Cardiac septum (tissue), 1 donor: ENCODE measurements at regions of chr1 and their contacts with region 1.

Region 1: DNA sequence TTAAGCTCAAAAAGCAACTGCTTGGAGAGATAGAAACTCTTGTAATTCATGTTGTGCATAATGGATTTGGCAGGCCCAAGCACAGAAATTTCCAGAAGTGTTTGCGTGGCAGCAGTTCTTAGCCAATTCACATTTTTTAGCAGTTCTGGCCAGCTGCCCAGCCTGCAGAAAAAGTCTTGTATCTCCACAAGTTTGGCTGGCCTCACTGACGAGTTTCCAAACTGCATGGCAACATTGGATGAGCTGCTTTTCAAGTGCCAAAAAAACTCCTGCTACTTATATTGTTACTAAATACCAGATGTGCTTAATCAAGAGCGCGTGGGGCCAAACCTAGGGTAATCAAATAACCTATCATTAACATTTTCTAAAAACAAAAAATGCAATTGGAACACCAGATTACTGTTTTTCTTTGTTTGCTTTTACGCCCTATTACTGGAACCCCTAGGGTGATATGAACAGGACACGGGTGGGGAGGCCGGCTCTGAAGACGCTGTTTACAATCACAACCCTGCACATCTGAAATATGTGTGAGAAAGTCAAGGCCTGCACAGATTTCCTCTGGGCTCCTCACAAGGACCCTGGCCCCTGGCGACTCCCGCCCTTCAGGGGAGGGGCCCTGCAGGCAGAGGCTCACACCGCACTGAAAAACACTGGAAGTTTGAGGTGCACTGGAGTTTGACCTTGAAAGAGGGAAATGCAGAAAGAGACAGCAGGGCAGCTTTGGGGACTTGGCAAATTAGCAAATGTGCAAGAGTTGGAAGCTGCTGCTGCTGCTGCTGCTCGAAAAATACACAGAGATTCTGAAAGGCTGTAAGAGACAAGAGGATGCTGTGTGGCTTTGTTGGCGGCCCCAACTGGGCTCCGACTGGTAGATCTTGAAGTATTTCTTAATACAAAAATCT is 55.2 kb upstream of the TARBP1 start:
- DNase-seq: peak; percentile 92

Region 2: DNA sequence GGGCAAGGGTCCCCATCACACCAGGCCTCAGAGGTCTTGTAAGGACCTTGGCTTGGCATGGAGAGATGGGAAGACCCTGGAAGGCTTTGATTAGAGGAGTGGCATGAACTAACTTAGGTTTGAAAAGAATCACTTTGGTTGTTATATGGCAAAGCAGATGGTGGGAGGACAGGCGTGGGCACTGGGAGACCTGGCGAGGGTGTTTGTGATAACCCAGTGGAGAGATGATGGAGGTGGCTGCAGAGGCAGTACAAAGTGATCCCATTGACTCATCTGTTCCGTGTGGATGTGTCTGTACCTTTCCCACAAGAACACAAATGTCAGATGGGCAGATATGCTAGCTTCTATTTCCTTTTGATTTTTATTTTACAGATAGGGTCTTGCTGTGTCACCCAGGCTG is 461.4 kb before region 1 on chr1:
- intact Hi-C with region 1: no loop called
- DNase-seq: no peak

Region 3: DNA sequence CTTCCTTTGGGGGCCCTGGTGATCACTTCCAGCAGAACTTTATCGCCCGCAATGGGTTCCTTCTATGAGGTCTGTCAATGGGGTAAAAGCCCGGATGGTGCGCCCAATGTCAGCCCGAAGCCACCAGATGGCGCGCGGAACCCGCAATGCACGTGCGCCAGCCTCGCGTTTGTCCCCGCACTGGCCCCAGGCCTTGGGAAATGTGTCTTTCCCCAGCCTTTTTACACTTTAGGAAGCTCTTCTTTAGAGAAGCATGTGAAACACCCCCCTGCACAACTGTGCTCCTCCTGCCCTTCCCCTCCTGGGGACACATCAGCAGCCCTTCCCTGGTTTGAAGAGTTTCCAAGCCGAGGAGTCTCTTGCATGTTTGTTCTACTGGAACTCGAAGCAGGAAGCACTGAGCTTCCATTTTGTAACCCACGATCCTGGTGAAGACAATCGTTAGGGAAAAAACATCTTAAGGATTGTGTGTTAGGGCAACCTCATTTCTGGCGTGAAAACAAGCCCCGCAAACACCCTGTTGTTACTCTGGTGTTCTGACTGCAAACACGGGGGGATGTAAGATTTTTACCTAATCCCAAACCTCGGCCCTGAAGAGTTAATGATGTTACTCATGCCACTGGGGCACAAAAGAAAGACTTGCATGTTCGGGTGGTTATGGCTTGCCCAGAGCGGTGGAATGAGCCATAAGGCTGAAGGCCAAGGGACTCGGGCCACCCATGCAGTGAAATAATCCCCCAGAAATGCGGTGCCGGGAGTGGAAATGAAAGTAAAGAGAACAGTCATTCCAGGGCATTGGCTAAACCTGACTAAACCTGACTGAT is 34.9 kb before region 1 on chr1:
- intact Hi-C with region 1: loop called (anchors 2 kb)
- DNase-seq: peak; percentile 96